ENCODE measurements at regions of chr7 and their contacts with region 1.

Region 1: GRCh38 chr7:142459551-142459963 is 201.7 kb upstream of the PRSS58 start:
- DNase-seq: peak; percentile 64
- H3K4me3 ChIP-seq: no peak overlapping the region; a peak in 1 of 4 replicates
- H3K27ac ChIP-seq: no peak overlapping the region
- H3K4me1 ChIP-seq: peaks cover 5 to 10% of the 10 kb centered on the region in 2 experiments; a peak in 2 of 4 replicates
- H3K27me3 ChIP-seq: no peaks in the 10 kb centered on the region
- CTCF ChIP-seq: peak; percentile 93
- EP300 ChIP-seq: no peak
- RAD21 ChIP-seq: peak; percentile 77

Region 2: DNA sequence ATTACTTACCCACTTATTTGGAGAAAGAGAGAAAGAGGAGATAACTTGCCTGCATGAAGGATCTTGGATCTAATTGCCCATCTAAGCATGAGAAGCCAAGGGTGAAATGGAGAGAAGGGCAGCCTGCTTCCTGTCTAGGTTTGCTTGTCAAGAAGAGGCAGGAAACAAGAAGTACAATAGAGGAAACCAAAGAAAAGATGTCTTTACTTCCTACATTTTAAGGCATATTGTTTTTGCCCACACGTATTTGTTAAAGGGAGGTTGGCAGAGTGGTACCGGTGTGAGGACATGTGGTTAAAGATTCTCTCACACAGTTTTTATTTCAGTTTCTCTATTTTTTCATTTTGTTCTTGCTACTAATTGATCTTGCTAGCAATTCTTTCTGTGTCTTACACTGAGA is 480.0 kb before region 1 on chr7:
- CTCF ChIA-PET with region 1: no interaction called
- POLR2A ChIA-PET with region 1: no interaction called
- DNase-seq: no peak
- H3K4me3 ChIP-seq: no peak overlapping the region
- H3K27ac ChIP-seq: no peak overlapping the region
- H3K4me1 ChIP-seq: peaks cover 4% of the 10 kb centered on the region in 2 experiments; a peak in 1 of 4 replicates
- H3K27me3 ChIP-seq: no peaks in the 10 kb centered on the region
- CTCF ChIP-seq: no peak
- EP300 ChIP-seq: no peak
- RAD21 ChIP-seq: no peak

Region 3: DNA sequence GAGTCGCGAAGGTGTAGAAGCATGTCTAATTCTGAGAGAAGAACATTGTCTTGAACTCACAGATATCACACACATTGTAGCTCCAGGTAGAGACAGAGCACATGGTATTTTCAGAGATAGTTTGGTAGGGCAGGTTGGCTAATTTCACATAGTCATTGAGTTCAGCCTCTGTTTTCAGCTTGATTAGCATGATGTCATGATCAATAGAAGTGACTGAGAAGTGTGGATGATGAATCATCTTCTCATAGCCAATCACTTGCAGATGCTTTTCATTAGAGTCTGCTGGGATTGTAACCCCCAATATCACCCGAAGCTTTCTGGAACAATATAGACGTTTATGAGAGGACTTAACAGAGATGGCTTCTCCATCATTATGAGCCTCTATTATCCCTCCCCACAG is 204.6 kb before region 1 on chr7:
- CTCF ChIA-PET with region 1: no interaction called
- POLR2A ChIA-PET with region 1: no interaction called
- DNase-seq: no peak
- H3K4me3 ChIP-seq: no peak overlapping the region
- H3K27ac ChIP-seq: no peak overlapping the region
- H3K4me1 ChIP-seq: no peaks in the 10 kb centered on the region
- H3K27me3 ChIP-seq: peaks cover 15% of the 10 kb centered on the region; the same call in 1 of the 2 replicates
- CTCF ChIP-seq: no peak
- EP300 ChIP-seq: no peak
- RAD21 ChIP-seq: no peak

Region 4: GRCh38 chr7:142298009-142298408 is 161.5 kb before region 1 on chr7:
- CTCF ChIA-PET with region 1: no interaction called
- POLR2A ChIA-PET with region 1: no interaction called
- DNase-seq: peak; percentile 17
- H3K4me3 ChIP-seq: no peak overlapping the region
- H3K27ac ChIP-seq: no peak overlapping the region
- H3K4me1 ChIP-seq: no peaks in the 10 kb centered on the region
- H3K27me3 ChIP-seq: peaks cover 43% of the 10 kb centered on the region
- CTCF ChIP-seq: peak; percentile 48
- EP300 ChIP-seq: no peak
- RAD21 ChIP-seq: no peak

Region 5: DNA sequence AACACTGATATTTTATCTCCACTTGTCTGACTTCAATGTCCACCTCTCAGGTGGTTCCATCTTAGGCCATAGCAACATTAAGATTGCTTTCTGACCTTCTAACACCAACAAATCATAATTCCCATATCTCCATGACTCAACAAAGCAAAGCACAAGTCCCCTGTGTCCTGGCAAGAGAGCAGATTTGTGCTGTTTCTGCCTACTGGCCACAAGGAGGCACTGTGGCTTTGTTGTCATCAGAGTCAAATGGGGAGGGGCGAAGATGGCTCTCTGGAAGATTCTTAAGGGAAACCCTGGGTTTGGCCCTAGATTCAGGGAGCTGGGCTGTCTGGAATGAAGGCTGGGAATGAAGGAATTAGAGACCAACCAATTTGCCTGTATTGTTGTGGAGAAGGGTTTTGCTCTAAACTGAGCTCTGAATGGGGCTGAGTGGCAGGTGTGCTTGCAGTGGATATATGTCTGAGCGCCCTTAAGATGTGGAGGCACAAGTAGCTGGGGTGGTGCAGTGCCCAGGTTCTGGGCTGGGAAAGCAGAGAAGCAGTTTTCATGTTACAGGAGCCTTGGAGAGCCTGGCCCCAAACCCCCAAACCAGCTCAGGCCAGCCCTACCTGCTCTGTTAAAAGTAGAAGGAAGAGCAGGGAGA is 46.9 kb before region 1 on chr7:
- CTCF ChIA-PET with region 1: interaction called, 19 read pairs
- POLR2A ChIA-PET with region 1: no interaction called
- DNase-seq: peak; percentile 54
- H3K4me3 ChIP-seq: no peak overlapping the region
- H3K27ac ChIP-seq: no peak overlapping the region
- H3K4me1 ChIP-seq: no peaks in the 10 kb centered on the region
- H3K27me3 ChIP-seq: no peaks in the 10 kb centered on the region
- CTCF ChIP-seq: peak; percentile 94
- EP300 ChIP-seq: no peak
- RAD21 ChIP-seq: peak; percentile 64

Region 6: GRCh38 chr7:142438235-142438922 is 21.2 kb before region 1 on chr7:
- CTCF ChIA-PET with region 1: interaction called, 151 read pairs
- POLR2A ChIA-PET with region 1: no interaction called
- DNase-seq: peak; percentile 61
- H3K4me3 ChIP-seq: no peak overlapping the region; a peak in 1 of 4 replicates
- H3K27ac ChIP-seq: no peak overlapping the region
- H3K4me1 ChIP-seq: peaks cover 14 to 16% of the 10 kb centered on the region in 2 experiments
- H3K27me3 ChIP-seq: no peaks in the 10 kb centered on the region
- CTCF ChIP-seq: peak; percentile 89
- EP300 ChIP-seq: no peak
- RAD21 ChIP-seq: peak; percentile 75

Region 7: DNA sequence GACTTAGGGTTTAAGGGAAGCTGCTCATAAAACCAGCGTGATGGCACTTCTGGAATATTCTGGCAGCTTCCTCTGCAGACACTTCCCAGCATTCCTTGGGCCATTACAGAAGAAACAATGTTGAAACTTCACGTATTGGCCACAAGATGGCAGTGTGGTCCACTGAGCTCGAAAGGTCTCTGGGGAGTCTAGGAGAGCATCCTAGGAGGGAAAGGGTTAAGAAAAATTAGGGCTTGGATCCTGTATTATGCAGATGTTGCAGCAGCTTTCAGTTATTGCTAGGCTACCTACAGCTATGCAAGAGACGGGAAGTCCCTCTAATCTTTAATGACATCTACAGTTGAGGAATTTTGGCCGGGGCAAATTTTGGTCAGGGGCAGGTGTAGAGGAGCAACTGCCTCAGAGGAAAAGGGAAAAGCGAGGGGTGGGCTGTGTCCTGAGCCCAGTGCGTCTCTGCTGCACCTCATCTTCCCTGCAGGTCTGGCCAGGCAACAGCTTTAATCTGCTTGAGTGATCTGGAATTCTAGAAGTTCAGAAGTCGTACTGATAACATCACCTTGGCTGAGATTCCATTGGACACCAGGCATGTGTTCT is 19.0 kb after region 1 on chr7:
- CTCF ChIA-PET with region 1: interaction called, 196 read pairs
- POLR2A ChIA-PET with region 1: no interaction called
- DNase-seq: peak; percentile 52
- H3K4me3 ChIP-seq: no peak overlapping the region
- H3K27ac ChIP-seq: no peak overlapping the region
- H3K4me1 ChIP-seq: peaks cover 7 to 13% of the 10 kb centered on the region in 2 experiments; a peak in 2 of 4 replicates
- H3K27me3 ChIP-seq: no peaks in the 10 kb centered on the region
- CTCF ChIP-seq: peak; percentile 89
- EP300 ChIP-seq: peak in 1 of 2 experiments; percentile 56; a peak in 2 of 4 replicates
- RAD21 ChIP-seq: peak; percentile 71

Region 8: DNA sequence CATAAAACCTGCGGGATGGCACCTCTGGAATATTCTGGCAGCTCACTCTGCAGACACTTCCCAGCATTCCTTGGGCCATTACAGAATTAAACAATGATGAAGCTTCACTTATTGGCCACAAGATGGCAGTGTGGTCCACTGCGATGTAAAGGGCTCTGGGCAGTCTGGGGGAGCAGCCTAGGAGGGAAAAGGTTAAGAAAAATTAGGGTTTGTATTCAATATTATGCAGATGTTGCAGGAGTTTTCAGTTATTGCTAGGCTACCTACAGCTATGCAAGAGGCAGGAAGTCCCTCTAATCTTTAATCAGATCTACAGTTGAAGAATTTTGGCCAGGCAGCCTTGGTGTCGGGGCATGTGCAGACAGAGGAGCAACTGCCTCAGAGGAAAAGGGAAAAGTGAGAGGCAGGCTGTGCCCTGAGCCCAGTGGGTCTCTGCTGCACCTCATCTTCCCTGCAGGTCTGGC is 56.5 kb after region 1 on chr7:
- CTCF ChIA-PET with region 1: interaction called, 19 read pairs
- POLR2A ChIA-PET with region 1: no interaction called
- DNase-seq: peak; percentile 69
- H3K4me3 ChIP-seq: peak overlapping the region in 1 of 2 experiments; percentile 20; a peak in 1 of 4 replicates
- H3K27ac ChIP-seq: no peak overlapping the region; a peak in 1 of 4 replicates
- H3K4me1 ChIP-seq: peaks cover 0 to 18% of the 10 kb centered on the region in 2 experiments; a peak in 2 of 4 replicates
- H3K27me3 ChIP-seq: peaks cover 33% of the 10 kb centered on the region
- CTCF ChIP-seq: peak; percentile 96
- EP300 ChIP-seq: no peak
- RAD21 ChIP-seq: peak; percentile 85

Region 9: GRCh38 chr7:142827951-142828500 is 368.5 kb after region 1 on chr7:
- CTCF ChIA-PET with region 1: no interaction called
- POLR2A ChIA-PET with region 1: no interaction called
- DNase-seq: no peak
- H3K4me3 ChIP-seq: no peak overlapping the region
- H3K27ac ChIP-seq: no peak overlapping the region
- H3K4me1 ChIP-seq: peaks cover 0 to 2% of the 10 kb centered on the region in 2 experiments; a peak in 1 of 4 replicates
- H3K27me3 ChIP-seq: no peaks in the 10 kb centered on the region; the same call in 1 of the 2 replicates
- CTCF ChIP-seq: no peak
- EP300 ChIP-seq: no peak
- RAD21 ChIP-seq: no peak

Measured in SK-N-SH (cell line).